ENCODE measurements at regions of chr2 and their contacts with region 1.

Region 1: GRCh38 chr2:64730551-64731262 is 77.0 kb upstream of the SERTAD2 start:
- DNase-seq: peak; percentile 31 to 77
- ATAC-seq: peak; percentile 72 to 93 (median 88)
- H3K4me3 ChIP-seq: peak overlapping the region in 9 of 10 donors; percentile 16 to 53 (median 45)
- H3K27ac ChIP-seq: peak overlapping the region; percentile 18 to 89 (median 66)
- H3K4me1 ChIP-seq: peaks cover 0 to 44% (median 23%) of the 10 kb centered on the region in 9 donors
- H3K27me3 ChIP-seq: no peaks in the 10 kb centered on the region
- CTCF ChIP-seq: no peak

Region 2: GRCh38 chr2:64642520-64643277 is 88.0 kb before region 1 on chr2:
- intact Hi-C with region 1: no loop called
- DNase-seq: no peak
- ATAC-seq: no peak
- H3K4me3 ChIP-seq: no peak overlapping the region
- H3K27ac ChIP-seq: peak overlapping the region in 3 of 10 donors; percentile 5 to 96 (median 96)
- H3K4me1 ChIP-seq: peaks cover 0 to 92% (median 67%) of the 10 kb centered on the region in 9 donors
- H3K27me3 ChIP-seq: no peaks in the 10 kb centered on the region
- CTCF ChIP-seq: no peak

Region 3: DNA sequence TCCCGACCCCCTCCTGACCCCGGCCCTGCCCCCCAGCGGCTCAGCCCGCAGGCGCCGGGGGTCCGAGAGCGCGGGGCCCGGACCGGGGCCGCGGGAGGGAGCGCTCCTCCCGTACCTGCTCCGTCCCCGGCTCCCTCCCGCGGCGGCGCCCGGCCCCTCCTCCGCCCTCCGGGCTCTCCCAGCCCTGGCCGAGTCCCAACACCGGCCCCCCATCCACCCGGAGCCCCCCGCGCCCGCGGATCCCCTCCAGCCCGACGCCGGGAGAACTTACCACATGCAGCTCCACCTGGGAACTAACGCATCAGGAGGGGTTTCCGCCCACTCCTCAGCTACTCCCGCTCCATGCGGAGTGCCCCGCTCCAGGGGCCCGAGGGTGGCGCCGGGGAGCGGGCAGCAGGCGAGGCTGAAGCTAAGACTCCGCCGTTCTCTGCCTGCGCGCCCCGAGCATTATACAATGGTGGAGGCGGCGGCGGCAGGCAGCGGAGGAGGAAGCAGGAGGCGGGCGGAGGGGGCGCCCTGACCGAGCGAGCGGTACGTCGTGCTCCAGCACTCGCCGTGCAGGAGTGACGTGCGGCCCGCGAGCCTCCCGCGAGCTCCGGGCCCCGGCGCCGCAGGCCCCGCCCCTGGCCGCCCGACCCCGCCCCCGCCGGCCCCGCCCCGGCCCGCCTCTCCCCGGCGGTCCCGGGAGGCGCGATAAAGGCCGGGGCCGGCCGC is 77.2 kb before region 1 on chr2 and contains the start of gene SERTAD2:
- intact Hi-C with region 1: loop called in 1 of 10 experiments (anchors 5 kb)
- DNase-seq: peak; percentile 90 to 92
- ATAC-seq: peak; percentile 89 to 93 (median 92)
- H3K4me3 ChIP-seq: peak within 1 kb of the TSS; percentile 65 to 99 (median 87)
- H3K27ac ChIP-seq: peak within 1 kb of the TSS; percentile 92 to 100 (median 99)
- H3K4me1 ChIP-seq: peaks cover 0 to 75% (median 57%) of the 10 kb centered on the region in 9 donors
- H3K27me3 ChIP-seq: no peaks in the 10 kb centered on the region
- CTCF ChIP-seq: peak in 6 of 9 donors; percentile 4 to 31 (median 24)
- total RNA-seq, gene SERTAD2: 11.3 to 20.9 (median 16.6) TPM

Region 4: GRCh38 chr2:64675860-64676259 is 54.8 kb before region 1 on chr2:
- intact Hi-C with region 1: loop called in 2 of 10 experiments (anchors 10 kb)
- DNase-seq: no peak
- ATAC-seq: no peak
- H3K4me3 ChIP-seq: no peak overlapping the region
- H3K27ac ChIP-seq: no peak overlapping the region
- H3K4me1 ChIP-seq: peaks cover 0 to 12% (median 0%) of the 10 kb centered on the region in 9 donors
- H3K27me3 ChIP-seq: no peaks in the 10 kb centered on the region
- CTCF ChIP-seq: no peak

Region 5: GRCh38 chr2:64888591-64889309 is 158.0 kb after region 1 on chr2:
- intact Hi-C with region 1: no loop called
- DNase-seq: no peak
- ATAC-seq: no peak
- H3K4me3 ChIP-seq: no peak overlapping the region
- H3K27ac ChIP-seq: no peak overlapping the region
- H3K4me1 ChIP-seq: no peaks in the 10 kb centered on the region
- H3K27me3 ChIP-seq: peaks cover 0 to 5% (median 0%) of the 10 kb centered on the region in 7 donors
- CTCF ChIP-seq: peak in 5 of 9 donors; percentile 9 to 25 (median 20)